Esophagus muscularis mucosa (tissue), 4 donors: ENCODE measurements at regions of chr1 and their contacts with region 1.

Region 1: DNA sequence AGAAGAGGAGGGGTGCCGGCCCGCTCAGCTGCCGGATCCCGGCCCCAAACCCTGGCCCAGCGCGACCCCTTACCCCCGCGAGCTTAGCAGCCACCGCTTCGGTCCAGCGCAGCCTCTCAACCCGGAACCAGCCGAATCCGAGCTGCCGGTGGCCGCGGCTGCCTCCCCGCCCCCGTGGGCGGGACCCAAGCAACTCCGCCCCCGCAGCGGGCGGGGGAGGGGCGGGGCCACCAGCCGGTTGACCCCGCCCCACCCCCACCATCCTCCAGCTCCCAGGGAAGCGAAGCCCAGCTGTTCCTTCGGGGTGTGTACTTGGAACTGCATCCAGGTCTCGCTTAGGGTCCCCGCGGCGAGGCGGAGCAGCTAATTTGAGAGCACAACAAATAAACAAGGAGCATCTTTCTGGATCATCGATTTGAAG is at the start of gene TRIM62:
- DNase-seq: peak; percentile 93
- H3K4me3 ChIP-seq: peak within 1 kb of the TSS; percentile 73 to 95 (median 88)
- H3K27ac ChIP-seq: peak within 1 kb of the TSS; percentile 76 to 91 (median 84)
- H3K4me1 ChIP-seq: peaks cover 11 to 28% (median 26%) of the 10 kb centered on the region in 4 donors
- H3K27me3 ChIP-seq: no peaks in the 10 kb centered on the region
- CTCF ChIP-seq: no peak
- EP300 ChIP-seq: no peak
- POLR2A ChIP-seq: peak; percentile 21
- total RNA-seq, gene TRIM62: 5.0 to 9.3 (median 7.8) TPM

Region 2: GRCh38 chr1:33127001-33127791 is 54.7 kb before region 1 on chr1:
- intact Hi-C with region 1: loop called (anchors 5 kb)
- DNase-seq: peak; percentile 100
- H3K4me3 ChIP-seq: peak overlapping the region; percentile 61 to 74 (median 66)
- H3K27ac ChIP-seq: peak overlapping the region; percentile 77 to 85 (median 80)
- H3K4me1 ChIP-seq: peaks cover 17 to 31% (median 24%) of the 10 kb centered on the region in 4 donors
- H3K27me3 ChIP-seq: no peaks in the 10 kb centered on the region
- CTCF ChIP-seq: peak; percentile 91 to 97 (median 91)
- EP300 ChIP-seq: no peak
- POLR2A ChIP-seq: no peak